ENCODE measurements at regions of chr19 and their contacts with region 1.

Region 1: DNA sequence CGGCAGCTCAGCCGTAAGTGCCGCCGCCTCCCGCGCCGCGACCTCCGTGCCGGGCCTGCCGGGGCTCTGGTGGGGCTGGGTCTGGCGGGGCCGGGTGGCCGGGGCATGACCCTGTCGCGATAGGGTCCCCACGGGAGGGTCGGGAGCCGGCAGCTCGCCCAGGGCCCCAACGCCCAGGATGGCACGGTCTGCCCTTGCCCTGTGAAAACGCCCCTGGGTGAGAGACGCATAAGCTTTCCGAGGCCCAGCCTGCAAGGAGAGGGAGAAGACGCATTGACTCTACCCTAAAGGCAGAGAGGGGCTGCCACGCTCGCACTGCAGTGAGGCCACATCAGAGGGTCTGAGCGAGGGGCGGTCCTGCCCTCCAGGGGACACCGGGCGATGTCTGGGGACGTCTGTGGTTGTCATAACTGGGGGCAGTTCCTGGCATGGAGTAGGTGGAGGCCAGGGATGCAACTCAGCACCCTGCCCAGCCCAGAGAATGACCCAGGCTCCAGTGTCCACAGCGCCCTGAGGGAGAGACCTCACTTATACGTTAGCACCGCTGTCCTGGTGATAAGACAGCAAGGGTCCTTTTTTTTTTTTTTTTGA is 539 bp downstream of the ZNF554 start:
- DNase-seq: no peak
- ATAC-seq: no peak
- H3K4me3 ChIP-seq: peak overlapping the region; percentile 79
- H3K4me3 Mint-ChIP-seq: peak overlapping the region; percentile 79 to 90 (median 86)
- H3K27ac ChIP-seq: peak overlapping the region; percentile 76
- H3K27ac Mint-ChIP-seq: peak overlapping the region in 5 of 9 donors; percentile 22 to 80 (median 52)
- H3K4me1 ChIP-seq: peaks cover 3 to 4% of the 10 kb centered on the region in 2 donors
- H3K4me1 Mint-ChIP-seq: peaks cover 3 to 19% (median 6%) of the 10 kb centered on the region in 7 donors
- H3K27me3 ChIP-seq: no peaks in the 10 kb centered on the region
- H3K27me3 Mint-ChIP-seq: no peaks in the 10 kb centered on the region

Region 2: GRCh38 chr19:2739602-2740313 is 80.4 kb before region 1 on chr19 and contains the start of gene SLC39A3:
- CTCF ChIA-PET with region 1: interaction called, 3 read pairs
- POLR2A ChIA-PET with region 1: no interaction called
- intact Hi-C with region 1: loop called in 1 of 2 experiments (anchors 2 kb)
- DNase-seq: peak; percentile 94 to 99 (median 98)
- ATAC-seq: peak; percentile 100
- H3K4me3 ChIP-seq: peak within 1 kb of the TSS; percentile 72
- H3K4me3 Mint-ChIP-seq: peak within 1 kb of the TSS; percentile 80 to 90 (median 86)
- H3K27ac ChIP-seq: peak within 1 kb of the TSS; percentile 82
- H3K27ac Mint-ChIP-seq: peak within 1 kb of the TSS in 8 of 9 donors; percentile 36 to 87 (median 72)
- H3K4me1 ChIP-seq: peaks cover 7 to 8% of the 10 kb centered on the region in 2 donors
- H3K4me1 Mint-ChIP-seq: peaks cover 8 to 29% (median 24%) of the 10 kb centered on the region in 7 donors
- H3K27me3 ChIP-seq: no peaks in the 10 kb centered on the region
- H3K27me3 Mint-ChIP-seq: peaks cover 6 to 18% (median 14%) of the 10 kb centered on the region in 5 donors
- total RNA-seq, gene SLC39A3: 10.1 to 28.5 (median 17.8) TPM

Region 3: GRCh38 chr19:2798733-2799132 is 21.5 kb before region 1 on chr19:
- CTCF ChIA-PET with region 1: no interaction called
- POLR2A ChIA-PET with region 1: no interaction called
- intact Hi-C with region 1: no loop called
- DNase-seq: no peak
- ATAC-seq: no peak
- H3K4me3 ChIP-seq: no peak overlapping the region
- H3K4me3 Mint-ChIP-seq: no peak overlapping the region
- H3K27ac ChIP-seq: no peak overlapping the region
- H3K27ac Mint-ChIP-seq: no peak overlapping the region
- H3K4me1 ChIP-seq: no peaks in the 10 kb centered on the region
- H3K4me1 Mint-ChIP-seq: peaks cover 0 to 6% (median 0%) of the 10 kb centered on the region in 7 donors
- H3K27me3 ChIP-seq: no peaks in the 10 kb centered on the region
- H3K27me3 Mint-ChIP-seq: no peaks in the 10 kb centered on the region

Region 4: DNA sequence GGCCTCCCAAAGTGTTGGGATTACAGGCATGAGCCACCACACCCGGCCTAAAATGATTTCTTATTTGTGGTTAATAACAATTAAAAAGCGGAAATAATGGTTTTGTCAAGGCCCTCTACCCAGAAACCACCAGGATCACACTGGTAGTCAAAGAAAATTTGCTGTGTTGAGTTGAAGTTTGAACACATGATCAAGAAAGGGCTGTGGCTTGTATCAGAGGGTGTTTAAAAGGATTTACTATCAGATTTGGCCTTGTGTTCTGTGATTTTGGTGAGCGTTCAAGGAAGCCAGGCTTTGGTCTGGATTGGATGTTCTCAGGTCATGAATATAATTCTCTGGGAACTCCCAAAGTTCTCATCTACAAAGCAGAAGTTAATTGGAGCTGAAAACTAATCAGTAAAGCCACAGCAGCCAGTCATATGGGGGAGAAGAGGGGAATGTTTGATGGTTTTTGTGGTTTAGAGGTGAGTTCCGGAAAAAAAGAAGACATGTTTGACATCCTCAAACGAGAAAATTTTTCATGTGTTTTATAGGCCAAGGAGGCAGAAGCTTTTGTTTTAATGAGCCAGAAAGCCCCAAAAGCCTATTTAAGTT is 36.3 kb after region 1 on chr19:
- CTCF ChIA-PET with region 1: no interaction called
- POLR2A ChIA-PET with region 1: interaction called, 6 read pairs
- intact Hi-C with region 1: loop called in 1 of 2 experiments (anchors 5 kb)
- DNase-seq: peak in 7 of 9 donors; percentile 74 to 85 (median 80)
- ATAC-seq: peak; percentile 91
- H3K4me3 ChIP-seq: no peak overlapping the region
- H3K4me3 Mint-ChIP-seq: peak overlapping the region; percentile 4 to 87 (median 64)
- H3K27ac ChIP-seq: peak overlapping the region; percentile 18
- H3K27ac Mint-ChIP-seq: peak overlapping the region in 8 of 9 donors; percentile 67 to 96 (median 84)
- H3K4me1 ChIP-seq: peaks cover 12 to 32% of the 10 kb centered on the region in 2 donors
- H3K4me1 Mint-ChIP-seq: peaks cover 5 to 55% (median 29%) of the 10 kb centered on the region in 7 donors
- H3K27me3 ChIP-seq: no peaks in the 10 kb centered on the region
- H3K27me3 Mint-ChIP-seq: no peaks in the 10 kb centered on the region

Region 5: DNA sequence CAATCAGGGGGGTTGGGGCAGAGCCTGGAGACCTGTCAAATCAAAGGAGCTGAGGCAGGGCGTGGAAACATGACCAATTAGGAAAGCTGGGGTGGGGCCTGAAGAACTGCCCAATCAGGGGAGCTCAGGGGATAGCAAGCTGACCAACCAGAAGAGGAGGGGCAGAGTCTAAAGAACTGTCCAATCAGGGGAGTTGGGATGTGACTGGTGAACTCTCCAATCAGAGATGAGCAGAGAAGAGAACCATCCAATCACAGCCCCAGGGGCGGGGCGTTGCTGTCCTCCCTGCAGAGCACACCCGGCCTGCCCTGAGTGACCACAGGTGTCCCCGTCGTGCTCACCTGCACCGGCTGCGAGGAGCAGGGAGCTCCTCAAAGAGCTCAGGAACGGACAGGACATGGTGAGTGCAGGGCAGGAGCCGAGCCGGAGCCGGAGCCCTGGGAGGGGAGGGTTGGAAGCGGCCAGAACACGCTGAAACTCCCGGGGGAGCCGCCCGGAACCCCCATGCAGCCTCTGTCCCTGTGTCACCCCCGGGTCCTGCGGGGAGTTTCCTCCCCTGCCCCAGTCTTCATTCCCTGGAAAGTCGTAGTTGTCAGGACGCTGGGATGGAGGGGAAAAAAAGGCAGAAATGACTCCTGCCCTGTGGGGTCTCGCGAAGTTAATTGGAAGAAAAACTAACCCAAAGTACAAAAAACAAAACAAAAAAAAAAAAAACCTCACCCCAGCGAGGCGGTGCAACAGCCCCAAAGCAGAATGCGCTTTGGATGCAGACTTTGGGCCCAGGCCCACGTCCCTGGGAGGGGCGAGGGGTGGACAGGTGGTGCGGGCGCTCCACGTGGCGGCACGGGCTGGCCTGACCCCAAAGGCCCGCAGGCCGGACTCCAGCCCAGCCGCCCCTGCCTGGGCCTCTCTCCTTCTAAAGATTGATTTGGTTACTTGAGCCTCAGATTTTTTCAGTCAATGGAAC is 47.1 kb after region 1 on chr19 and contains the start of gene ZNF556:
- CTCF ChIA-PET with region 1: interaction called, 3 read pairs
- POLR2A ChIA-PET with region 1: no interaction called
- intact Hi-C with region 1: loop called in 1 of 2 experiments (anchors 1 kb)
- DNase-seq: no peak
- ATAC-seq: no peak
- H3K4me3 ChIP-seq: no peak within 1 kb of the TSS
- H3K4me3 Mint-ChIP-seq: no peak within 1 kb of the TSS
- H3K27ac ChIP-seq: no peak within 1 kb of the TSS
- H3K27ac Mint-ChIP-seq: no peak within 1 kb of the TSS
- H3K4me1 ChIP-seq: no peaks in the 10 kb centered on the region
- H3K4me1 Mint-ChIP-seq: peaks cover 0 to 14% (median 9%) of the 10 kb centered on the region in 7 donors
- H3K27me3 ChIP-seq: no peaks in the 10 kb centered on the region
- H3K27me3 Mint-ChIP-seq: peaks cover 0 to 6% (median 4%) of the 10 kb centered on the region in 5 donors
- total RNA-seq, gene ZNF556: not detected

Region 6: DNA sequence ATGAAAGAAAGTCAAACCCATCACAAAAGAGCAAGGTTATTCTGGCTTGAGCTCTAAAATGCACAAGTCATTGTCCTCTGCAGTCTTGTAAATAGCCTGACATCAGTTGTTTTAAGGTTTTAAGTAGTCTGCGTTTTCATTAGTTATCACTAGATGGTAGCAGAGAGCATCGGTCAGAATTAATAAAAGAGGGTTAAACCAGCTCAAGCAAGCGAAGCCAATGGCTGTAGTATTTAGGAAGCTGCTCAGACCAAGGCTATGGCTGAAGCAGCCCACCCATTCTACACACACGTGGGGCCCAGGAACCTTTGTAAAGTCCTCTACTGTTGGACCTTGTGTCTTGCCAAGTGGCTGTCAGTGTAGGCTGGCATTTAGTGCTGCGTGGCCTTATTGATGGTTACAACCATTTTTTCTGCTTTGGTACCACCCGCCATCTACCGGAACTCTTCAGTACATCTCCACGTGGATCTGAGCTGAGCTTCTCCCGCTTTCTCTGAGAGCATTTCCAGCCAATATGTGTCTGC is 67.2 kb after region 1 on chr19:
- CTCF ChIA-PET with region 1: no interaction called
- POLR2A ChIA-PET with region 1: no interaction called
- intact Hi-C with region 1: loop called in 1 of 2 experiments (anchors 1 kb)
- DNase-seq: peak in 4 of 9 donors; percentile 14 to 19 (median 17)
- ATAC-seq: peak; percentile 50
- H3K4me3 ChIP-seq: no peak overlapping the region
- H3K4me3 Mint-ChIP-seq: peak overlapping the region in 1 of 10 donors; percentile 42
- H3K27ac ChIP-seq: no peak overlapping the region
- H3K27ac Mint-ChIP-seq: peak overlapping the region in 4 of 9 donors; percentile 26 to 84 (median 76)
- H3K4me1 ChIP-seq: no peaks in the 10 kb centered on the region
- H3K4me1 Mint-ChIP-seq: peaks cover 0 to 13% (median 8%) of the 10 kb centered on the region in 7 donors
- H3K27me3 ChIP-seq: no peaks in the 10 kb centered on the region
- H3K27me3 Mint-ChIP-seq: no peaks in the 10 kb centered on the region

Measured in naive thymus-derived CD4-positive, alpha-beta T cell (primary cell).